Common myeloid progenitor, CD34-positive (primary cell): ENCODE measurements at regions of chr19 and their contacts with region 1.

Region 1: DNA sequence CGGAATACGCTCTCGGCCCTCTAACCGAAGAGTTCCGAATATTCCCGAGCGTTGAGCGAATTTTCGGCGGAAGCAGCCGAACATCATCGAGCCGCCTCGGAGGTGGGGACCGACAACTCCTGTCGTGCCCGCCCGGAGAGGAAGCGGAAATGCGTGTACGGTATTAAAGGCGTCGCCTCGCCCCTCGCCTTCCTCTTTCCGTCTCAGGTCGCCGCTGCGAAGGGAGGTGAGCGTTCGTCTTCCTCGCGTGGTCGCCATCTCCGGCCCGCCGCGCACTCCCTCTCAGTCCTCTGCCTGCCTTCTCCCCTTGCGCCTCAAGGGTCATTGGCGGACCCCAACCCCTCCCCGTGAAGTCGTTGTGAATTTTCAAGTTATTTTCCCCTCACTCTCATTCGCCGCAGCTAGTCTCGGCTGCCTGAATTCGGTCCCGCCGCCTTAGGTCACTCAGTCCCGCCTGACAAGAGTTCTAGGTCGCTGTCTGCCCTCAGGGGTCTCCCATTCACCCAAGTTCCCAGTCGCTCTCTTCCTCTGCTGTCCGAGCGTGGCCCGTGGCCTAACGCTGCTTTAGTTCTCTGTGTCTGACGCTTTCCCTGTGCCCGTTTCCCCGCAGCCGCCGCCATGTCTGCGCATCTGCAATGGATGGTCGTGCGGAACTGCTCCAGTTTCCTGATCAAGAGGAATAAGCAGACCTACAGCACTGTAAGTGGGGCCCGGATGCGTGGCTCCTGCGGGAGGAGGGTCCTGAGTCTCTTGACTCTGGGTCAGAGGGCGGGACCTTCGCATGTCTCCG is at the start of gene RPL28:
- DNase-seq: peak; percentile 98 to 99 (median 99)
- H3K4me3 ChIP-seq: peak within 1 kb of the TSS; percentile 84 to 99 (median 99)
- H3K27ac ChIP-seq: peak within 1 kb of the TSS; percentile 80 to 95
- H3K4me1 ChIP-seq: peaks cover 0 to 62% (median 54%) of the 10 kb centered on the region in 4 experiments
- H3K27me3 ChIP-seq: no peaks in the 10 kb centered on the region

Region 2: GRCh38 chr19:55289117-55289796 is 96.7 kb before region 1 on chr19:
- CTCF ChIA-PET with region 1: interaction called, 22 read pairs
- POLR2A ChIA-PET with region 1: interaction called, 3 read pairs
- DNase-seq: no peak
- H3K4me3 ChIP-seq: no peak overlapping the region
- H3K27ac ChIP-seq: no peak overlapping the region
- H3K4me1 ChIP-seq: peaks cover 0 to 5% (median 1%) of the 10 kb centered on the region in 4 experiments
- H3K27me3 ChIP-seq: no peaks in the 10 kb centered on the region

Region 3: DNA sequence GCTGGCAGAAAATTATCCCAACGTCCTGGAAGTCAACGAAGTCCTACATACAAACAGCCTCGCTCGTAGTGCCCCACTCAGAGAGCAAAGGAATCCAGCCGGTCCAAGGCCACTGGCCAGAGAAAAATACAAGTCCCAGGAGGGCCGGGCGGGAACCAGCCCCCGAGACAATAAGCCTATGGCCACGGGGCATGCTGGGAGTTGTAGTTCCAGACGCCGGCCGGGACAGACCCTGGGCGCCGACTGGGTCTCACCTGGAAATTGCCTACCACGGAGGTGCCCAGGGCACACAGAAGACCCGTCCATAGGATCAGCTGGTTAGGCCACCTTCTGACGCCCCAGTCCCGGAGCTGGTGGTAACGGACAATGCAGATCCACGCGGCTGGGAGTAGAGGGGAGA is 66.2 kb before region 1 on chr19:
- CTCF ChIA-PET with region 1: interaction called, 12 read pairs
- POLR2A ChIA-PET with region 1: no interaction called
- DNase-seq: no peak
- H3K4me3 ChIP-seq: peak overlapping the region in 2 of 7 experiments; percentile 24 to 64
- H3K27ac ChIP-seq: no peak overlapping the region
- H3K4me1 ChIP-seq: peaks cover 0 to 38% (median 32%) of the 10 kb centered on the region in 4 experiments
- H3K27me3 ChIP-seq: no peaks in the 10 kb centered on the region

Region 4: GRCh38 chr19:55398200-55398925 is 12.4 kb after region 1 on chr19:
- CTCF ChIA-PET with region 1: interaction called, 25 read pairs
- POLR2A ChIA-PET with region 1: interaction called, 5 read pairs
- DNase-seq: no peak
- H3K4me3 ChIP-seq: peak overlapping the region in 1 of 7 experiments; percentile 31
- H3K27ac ChIP-seq: no peak overlapping the region
- H3K4me1 ChIP-seq: no peaks in the 10 kb centered on the region
- H3K27me3 ChIP-seq: no peaks in the 10 kb centered on the region

Region 5: GRCh38 chr19:55437410-55438075 is 51.6 kb after region 1 on chr19:
- CTCF ChIA-PET with region 1: no interaction called
- POLR2A ChIA-PET with region 1: no interaction called
- DNase-seq: peak; percentile 42 to 77 (median 75)
- H3K4me3 ChIP-seq: no peak overlapping the region
- H3K27ac ChIP-seq: no peak overlapping the region
- H3K4me1 ChIP-seq: peaks cover 0 to 23% (median 19%) of the 10 kb centered on the region in 4 experiments
- H3K27me3 ChIP-seq: peaks cover 4 to 84% (median 39%) of the 10 kb centered on the region in 5 experiments

Region 6: DNA sequence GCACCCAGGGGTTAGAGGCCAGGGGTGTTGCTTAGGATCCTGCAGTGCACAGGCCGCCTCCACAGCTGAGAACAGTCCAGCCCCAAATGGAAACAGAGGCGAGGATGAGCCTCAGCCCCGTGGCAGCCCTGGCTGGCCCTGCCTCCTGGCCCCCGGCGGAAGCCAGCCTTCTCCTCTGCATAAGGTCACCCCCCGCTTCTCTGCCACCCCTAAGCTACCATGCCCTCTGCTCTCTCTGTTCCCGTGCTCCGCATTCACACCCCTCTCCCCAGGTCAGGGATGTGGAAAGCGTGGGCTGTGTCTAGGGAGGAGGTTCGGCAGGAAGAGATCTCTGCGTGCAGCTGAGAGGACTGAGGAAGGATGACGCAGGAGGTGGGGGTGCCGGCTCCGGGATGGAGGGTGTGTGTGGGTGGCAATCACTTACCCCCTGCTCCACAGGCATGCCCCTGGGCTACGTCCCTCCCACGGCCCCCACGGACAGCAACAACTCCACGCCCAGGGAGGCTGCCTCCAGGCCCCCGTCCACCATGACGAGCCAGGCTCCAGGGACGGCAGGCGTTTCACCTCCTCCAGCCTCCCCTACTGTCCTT is 108.3 kb after region 1 on chr19:
- CTCF ChIA-PET with region 1: no interaction called
- POLR2A ChIA-PET with region 1: no interaction called
- DNase-seq: peak in 2 of 3 donors; percentile 11 to 38
- H3K4me3 ChIP-seq: peak overlapping the region in 3 of 7 experiments; percentile 1 to 52 (median 36)
- H3K27ac ChIP-seq: no peak overlapping the region
- H3K4me1 ChIP-seq: peaks cover 0 to 6% (median 3%) of the 10 kb centered on the region in 4 experiments
- H3K27me3 ChIP-seq: peaks cover 0 to 28% (median 2%) of the 10 kb centered on the region in 5 experiments